A549 (cell line): ENCODE measurements at regions of chr10 and their contacts with region 1.

Region 1: GRCh38 chr10:62076891-62077290 is 175.4 kb downstream of the ARID5B start:
- DNase-seq: peak; percentile 69 to 79
- ATAC-seq: peak; percentile 97 to 99
- H3K4me3 ChIP-seq: no peak overlapping the region
- H3K27ac ChIP-seq: peak overlapping the region; percentile 66 to 78
- H3K4me1 ChIP-seq: peaks cover 27% of the 10 kb centered on the region
- CTCF ChIP-seq: peak; percentile 35; the same call in 2 of the 3 replicates
- EP300 ChIP-seq: no peak
- POLR2A ChIP-seq: no peak
- RAD21 ChIP-seq: peak; percentile 65 to 72

Region 2: DNA sequence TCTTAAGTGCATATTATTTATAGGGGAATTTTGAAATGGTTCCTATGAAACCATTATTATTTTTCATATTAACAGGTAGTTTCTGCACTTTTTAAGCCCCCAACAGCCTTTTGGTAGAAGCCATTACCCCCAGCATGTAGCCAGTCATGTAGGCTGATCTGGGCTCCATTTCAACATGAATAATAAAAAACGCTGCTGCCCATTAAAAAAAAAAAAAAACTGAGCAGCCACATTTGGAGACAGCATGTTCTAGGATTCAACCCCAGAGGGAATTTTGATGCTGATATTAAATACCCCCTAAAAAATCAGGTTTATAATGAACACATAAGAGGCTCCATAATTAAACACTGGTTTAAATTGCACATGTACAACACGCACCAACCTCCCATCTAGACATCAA is 10.4 kb after region 1 on chr10:
- CTCF ChIA-PET with region 1: interaction called, 11 read pairs
- POLR2A ChIA-PET with region 1: no interaction called
- DNase-seq: no peak
- ATAC-seq: no peak
- H3K4me3 ChIP-seq: no peak overlapping the region
- H3K27ac ChIP-seq: no peak overlapping the region
- H3K4me1 ChIP-seq: peaks cover 24% of the 10 kb centered on the region
- CTCF ChIP-seq: no peak
- EP300 ChIP-seq: no peak
- POLR2A ChIP-seq: no peak
- RAD21 ChIP-seq: no peak

Region 3: GRCh38 chr10:62237506-62237905 is 160.6 kb after region 1 on chr10:
- CTCF ChIA-PET with region 1: no interaction called
- POLR2A ChIA-PET with region 1: no interaction called
- DNase-seq: no peak
- ATAC-seq: no peak
- H3K4me3 ChIP-seq: no peak overlapping the region
- H3K27ac ChIP-seq: peak overlapping the region in 1 of 2 experiments; percentile 13; a peak in 1 of 6 replicates
- H3K4me1 ChIP-seq: peaks cover 64% of the 10 kb centered on the region
- CTCF ChIP-seq: no peak
- EP300 ChIP-seq: no peak
- POLR2A ChIP-seq: no peak
- RAD21 ChIP-seq: no peak